Ascending aorta (tissue), 2 donors: ENCODE measurements at regions of chr9 and their contacts with region 1.

Region 1: GRCh38 chr9:126301985-126302603 is 24.5 kb upstream of the MVB12B start:
- DNase-seq: peak in 1 of 2 donors; percentile 66
- H3K4me3 ChIP-seq: no peak overlapping the region
- H3K27ac ChIP-seq: no peak overlapping the region
- H3K4me1 ChIP-seq: no peaks in the 10 kb centered on the region
- H3K27me3 ChIP-seq: no peaks in the 10 kb centered on the region
- CTCF ChIP-seq: peak in 1 of 3 experiments; percentile 56

Region 2: GRCh38 chr9:126398403-126399058 is 96.4 kb after region 1 on chr9:
- intact Hi-C with region 1: loop called (anchors 1 kb)
- DNase-seq: peak in 1 of 2 donors; percentile 82
- H3K4me3 ChIP-seq: no peak overlapping the region
- H3K27ac ChIP-seq: no peak overlapping the region
- H3K4me1 ChIP-seq: no peaks in the 10 kb centered on the region
- H3K27me3 ChIP-seq: no peaks in the 10 kb centered on the region
- CTCF ChIP-seq: peak; percentile 88 to 98 (median 92)